ENCODE measurements at regions of chr1 and their contacts with region 1.

Region 1: DNA sequence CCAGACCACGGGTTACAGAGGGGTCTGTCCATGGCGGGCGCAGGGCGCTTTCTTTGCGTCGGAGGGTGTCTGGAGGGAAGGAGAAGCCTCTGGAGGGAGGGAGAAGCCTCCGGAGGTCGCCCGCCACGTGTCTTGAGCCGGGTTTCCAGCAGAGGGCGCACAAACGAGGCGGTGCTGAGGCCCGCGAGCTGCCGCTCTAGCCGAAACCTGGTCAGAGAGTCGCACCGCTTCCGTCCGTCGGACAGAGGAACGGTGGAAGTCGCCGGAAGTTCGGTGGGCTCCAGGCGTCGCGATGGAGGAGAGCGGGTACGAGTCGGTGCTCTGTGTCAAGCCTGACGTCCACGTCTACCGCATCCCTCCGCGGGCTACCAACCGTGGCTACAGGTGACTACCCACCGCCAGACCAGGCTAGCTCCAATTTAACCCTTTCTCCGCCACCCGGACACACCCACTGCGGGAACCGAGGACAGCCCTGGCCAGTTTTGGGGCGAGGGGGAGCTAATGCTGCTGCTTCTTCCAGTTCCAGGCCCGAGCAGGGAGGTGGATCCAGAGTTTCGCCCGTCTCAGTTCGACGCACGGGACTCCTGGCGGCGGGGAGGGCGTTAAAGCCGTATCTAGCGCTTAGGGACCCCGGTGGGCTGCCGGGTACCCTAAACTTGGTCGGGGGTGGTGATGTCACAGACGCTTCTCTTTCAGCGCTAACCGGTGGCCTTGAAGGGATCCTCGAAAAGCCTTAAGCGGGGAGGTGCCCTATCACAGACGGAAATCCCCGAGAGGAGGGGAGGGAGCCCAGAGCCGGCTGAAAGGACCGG is at the start of gene NECAP2:
- DNase-seq: peak; percentile 97
- ATAC-seq: peak; percentile 91
- H3K4me3 Mint-ChIP-seq: peak within 1 kb of the TSS; percentile 81
- H3K27ac Mint-ChIP-seq: peak within 1 kb of the TSS; percentile 96
- H3K4me1 Mint-ChIP-seq: peaks cover 36% of the 10 kb centered on the region
- H3K27me3 Mint-ChIP-seq: no peaks in the 10 kb centered on the region
- total RNA-seq, gene NECAP2: 46.5 to 54.2 TPM

Region 2: DNA sequence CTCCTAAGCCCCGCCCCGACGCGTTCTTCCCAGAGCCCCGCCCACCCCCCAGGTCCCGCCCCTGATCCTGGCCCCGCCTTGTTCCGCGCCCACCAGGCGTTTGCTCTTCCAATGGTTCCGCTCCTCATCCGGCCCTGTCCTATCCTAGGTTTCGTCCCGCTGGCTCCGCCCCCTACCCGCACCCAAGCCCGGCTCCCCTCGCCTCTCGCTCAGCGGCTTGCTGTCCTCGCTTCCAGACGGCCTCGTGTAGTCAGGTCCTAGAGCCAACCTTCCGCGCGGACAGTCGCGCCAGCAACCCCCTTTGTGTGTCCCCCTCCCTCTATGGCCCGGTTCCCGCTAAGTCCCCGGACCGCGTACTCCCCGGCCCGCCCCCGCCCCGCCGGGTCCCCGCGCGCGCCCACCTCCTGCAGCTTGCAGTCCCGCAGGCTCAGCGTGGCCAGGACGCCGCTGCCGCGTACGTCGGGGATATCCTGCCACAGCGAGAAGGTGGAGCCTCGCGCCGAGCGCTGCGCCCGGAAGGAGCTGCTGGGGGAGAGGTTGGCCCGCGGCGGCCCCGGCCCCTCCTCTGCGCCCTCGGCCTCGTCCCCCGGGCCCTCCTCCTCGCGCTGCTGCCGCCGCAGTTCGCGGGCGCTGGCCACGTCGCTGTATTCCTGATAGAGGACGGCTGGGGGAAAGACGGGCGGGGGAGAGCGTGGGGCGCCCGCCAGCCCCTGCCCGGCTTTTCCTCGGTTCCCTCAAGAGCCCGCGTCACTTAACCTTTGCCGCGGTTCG is 233.9 kb before region 1 on chr1:
- CTCF ChIA-PET with region 1: no interaction called
- POLR2A ChIA-PET with region 1: no interaction called
- intact Hi-C with region 1: loop called in 1 of 2 experiments (anchors 1 kb)
- DNase-seq: peak; percentile 97
- ATAC-seq: peak; percentile 94
- H3K4me3 Mint-ChIP-seq: peak overlapping the region; percentile 72
- H3K27ac Mint-ChIP-seq: peak overlapping the region; percentile 90
- H3K4me1 Mint-ChIP-seq: peaks cover 9% of the 10 kb centered on the region
- H3K27me3 Mint-ChIP-seq: no peaks in the 10 kb centered on the region

Region 3: GRCh38 chr1:16396591-16396990 is 44.1 kb before region 1 on chr1:
- CTCF ChIA-PET with region 1: no interaction called
- POLR2A ChIA-PET with region 1: no interaction called
- intact Hi-C with region 1: no loop called
- DNase-seq: no peak
- ATAC-seq: no peak
- H3K4me3 Mint-ChIP-seq: no peak overlapping the region
- H3K27ac Mint-ChIP-seq: peak overlapping the region; percentile 56
- H3K4me1 Mint-ChIP-seq: peaks cover 32% of the 10 kb centered on the region
- H3K27me3 Mint-ChIP-seq: no peaks in the 10 kb centered on the region

Region 4: DNA sequence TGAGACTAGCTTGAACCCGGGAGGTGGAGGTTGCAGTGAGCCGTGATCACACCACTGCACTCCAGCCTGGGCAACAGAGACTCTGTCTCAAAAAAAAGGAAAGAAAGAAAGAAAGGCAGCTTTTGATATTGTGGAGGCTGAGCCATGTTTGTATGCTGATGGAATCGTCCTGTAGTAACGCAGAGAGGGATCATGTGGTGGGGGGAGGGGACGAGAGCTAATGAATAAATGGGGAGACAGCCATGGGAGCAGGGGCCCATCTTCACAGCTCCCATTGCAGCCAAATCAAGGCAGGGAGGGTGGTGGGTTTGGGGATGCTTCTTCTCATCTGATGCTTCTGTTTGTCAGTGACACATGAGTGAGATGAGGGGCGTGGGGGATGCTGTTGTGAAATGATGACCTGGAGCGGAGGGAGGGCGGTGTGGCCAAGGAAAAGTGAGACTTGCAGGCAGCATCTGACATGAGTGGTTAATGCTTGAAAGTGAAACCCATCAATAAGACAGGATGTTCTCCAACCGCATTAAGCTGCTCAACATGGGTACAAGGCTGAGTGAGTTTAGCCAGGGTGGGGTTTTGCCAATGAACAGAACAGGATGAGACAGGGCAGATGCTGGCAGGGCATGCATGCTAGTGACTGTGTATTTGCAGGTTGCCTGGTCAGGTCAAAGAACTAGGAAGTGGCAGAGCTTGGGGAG is 20.1 kb before region 1 on chr1:
- CTCF ChIA-PET with region 1: interaction called, 17 read pairs
- POLR2A ChIA-PET with region 1: interaction called, 4 read pairs
- intact Hi-C with region 1: loop called in 1 of 2 experiments (anchors 1 kb)
- DNase-seq: peak; percentile 84
- ATAC-seq: peak; percentile 97
- H3K4me3 Mint-ChIP-seq: peak overlapping the region; percentile 38
- H3K27ac Mint-ChIP-seq: peak overlapping the region; percentile 88
- H3K4me1 Mint-ChIP-seq: peaks cover 30% of the 10 kb centered on the region
- H3K27me3 Mint-ChIP-seq: no peaks in the 10 kb centered on the region

Region 5: GRCh38 chr1:16478091-16478490 is 37.4 kb after region 1 on chr1:
- CTCF ChIA-PET with region 1: no interaction called
- POLR2A ChIA-PET with region 1: no interaction called
- intact Hi-C with region 1: no loop called
- DNase-seq: no peak
- ATAC-seq: no peak
- H3K4me3 Mint-ChIP-seq: no peak overlapping the region
- H3K27ac Mint-ChIP-seq: no peak overlapping the region
- H3K4me1 Mint-ChIP-seq: peaks cover 4% of the 10 kb centered on the region
- H3K27me3 Mint-ChIP-seq: no peaks in the 10 kb centered on the region

Region 6: DNA sequence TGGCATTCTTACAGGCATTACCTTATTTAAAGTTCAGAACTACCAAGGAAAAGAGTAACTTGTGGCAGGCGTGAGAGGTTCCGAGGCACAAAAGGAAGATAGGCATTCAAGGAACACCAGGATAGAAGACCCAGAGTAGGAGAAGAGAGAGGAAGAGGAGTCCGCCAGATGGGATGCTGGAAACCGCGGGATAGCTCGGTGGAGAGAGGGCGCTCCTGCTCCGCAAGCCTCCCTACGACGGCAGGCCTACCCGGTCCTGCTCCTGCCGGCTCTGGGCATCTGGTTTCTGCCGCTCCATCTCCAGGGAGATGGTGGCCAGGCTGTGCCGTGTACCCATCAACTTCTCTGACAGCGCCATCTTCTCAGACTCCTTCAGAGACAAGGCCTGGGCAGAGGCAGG is 178.0 kb after region 1 on chr1:
- CTCF ChIA-PET with region 1: interaction called, 4 read pairs
- POLR2A ChIA-PET with region 1: no interaction called
- intact Hi-C with region 1: loop called (anchors 2 to 5 kb)
- DNase-seq: peak; percentile 9
- ATAC-seq: no peak
- H3K4me3 Mint-ChIP-seq: no peak overlapping the region
- H3K27ac Mint-ChIP-seq: no peak overlapping the region
- H3K4me1 Mint-ChIP-seq: no peaks in the 10 kb centered on the region
- H3K27me3 Mint-ChIP-seq: no peaks in the 10 kb centered on the region

Region 7: GRCh38 chr1:16913833-16914662 is 473.4 kb after region 1 on chr1:
- CTCF ChIA-PET with region 1: no interaction called
- POLR2A ChIA-PET with region 1: no interaction called
- intact Hi-C with region 1: loop called in 1 of 2 experiments (anchors 5 kb)
- DNase-seq: peak; percentile 96
- ATAC-seq: peak; percentile 96
- H3K4me3 Mint-ChIP-seq: peak overlapping the region; percentile 89
- H3K27ac Mint-ChIP-seq: peak overlapping the region; percentile 83
- H3K4me1 Mint-ChIP-seq: peaks cover 31% of the 10 kb centered on the region
- H3K27me3 Mint-ChIP-seq: no peaks in the 10 kb centered on the region